Thyroid gland (tissue), 4 donors: ENCODE measurements at regions of chr2 and their contacts with region 1.

Region 1: DNA sequence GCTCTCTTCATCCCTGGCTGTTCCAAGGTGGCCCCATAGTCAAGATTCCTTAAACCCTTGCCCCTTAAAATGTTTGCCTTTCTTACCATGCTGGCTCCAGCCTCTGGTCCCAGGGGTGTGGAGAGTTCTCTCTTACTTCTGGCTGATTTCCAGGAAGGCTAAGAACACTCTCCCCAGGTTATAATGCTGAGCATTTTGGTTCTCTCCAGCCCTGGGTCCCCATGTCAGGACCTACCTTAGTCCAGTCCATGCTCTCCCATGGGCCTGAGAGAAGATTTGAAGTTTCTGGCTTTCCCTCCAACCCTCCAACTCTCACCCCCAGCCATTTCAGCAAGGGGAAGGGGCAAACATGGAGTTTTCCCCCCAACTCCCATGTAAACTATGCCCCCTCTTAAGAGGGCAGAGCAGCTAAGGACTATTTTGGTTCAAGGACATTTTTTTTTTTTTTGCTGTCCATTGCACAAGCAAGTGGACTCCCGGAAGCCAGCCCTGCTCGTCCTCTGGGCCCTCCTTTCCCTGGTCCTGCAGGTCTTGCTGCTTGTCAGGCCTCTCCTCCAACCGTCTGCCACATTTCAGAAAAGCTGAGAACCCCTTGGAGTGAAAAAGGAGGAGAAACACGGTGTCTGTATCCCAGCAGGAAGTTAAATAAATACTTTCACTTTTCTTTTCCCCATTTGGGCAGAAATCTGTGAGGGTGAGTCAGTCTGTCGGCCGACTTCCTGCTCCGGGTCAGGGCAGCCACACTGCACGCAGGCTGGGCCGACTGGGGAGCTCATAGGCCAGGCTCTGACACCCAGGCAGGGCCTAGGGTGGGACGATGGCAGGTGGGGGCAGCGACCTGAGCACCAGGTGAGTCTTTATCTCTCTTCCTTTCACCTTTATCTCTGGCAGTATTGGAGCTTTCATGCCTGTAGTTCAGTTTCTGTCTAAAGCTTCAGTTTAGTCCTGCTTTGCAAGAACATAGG is at the start of gene SP140L:
- DNase-seq: peak; percentile 51 to 65
- H3K4me3 ChIP-seq: peak within 1 kb of the TSS in 2 of 3 donors; percentile 19 to 40
- H3K27ac ChIP-seq: peak within 1 kb of the TSS; percentile 41 to 62 (median 59)
- H3K4me1 ChIP-seq: peaks cover 9% of the 10 kb centered on the region in 2 donors
- H3K27me3 ChIP-seq: no peaks in the 10 kb centered on the region
- CTCF ChIP-seq: no peak
- POLR2A ChIP-seq: no peak
- total RNA-seq, gene SP140L: 6.5 to 18.6 (median 8.4) TPM

Region 2: DNA sequence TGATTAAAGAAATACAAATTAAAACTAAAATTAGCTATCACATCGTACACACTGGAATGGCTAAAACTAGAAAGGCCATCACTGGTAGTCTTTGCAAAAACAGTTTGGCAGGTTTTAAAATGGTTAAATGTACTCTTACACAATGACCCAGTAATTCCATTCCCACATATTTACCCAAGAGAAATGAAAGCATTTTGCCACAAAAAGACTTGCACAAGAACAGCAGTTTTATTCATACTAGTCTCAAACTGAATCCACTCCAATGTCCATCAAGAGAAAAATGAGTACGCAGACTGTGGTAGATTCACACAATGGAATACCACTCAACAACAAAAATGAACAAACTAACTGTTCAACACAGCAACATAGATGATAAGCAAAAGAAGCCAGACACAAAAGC is 29.3 kb after region 1 on chr2:
- intact Hi-C with region 1: no loop called
- DNase-seq: no peak
- H3K4me3 ChIP-seq: no peak overlapping the region
- H3K27ac ChIP-seq: no peak overlapping the region
- H3K4me1 ChIP-seq: no peaks in the 10 kb centered on the region
- H3K27me3 ChIP-seq: no peaks in the 10 kb centered on the region
- CTCF ChIP-seq: no peak
- POLR2A ChIP-seq: no peak

Region 3: GRCh38 chr2:230423851-230424458 is 97.2 kb after region 1 on chr2:
- intact Hi-C with region 1: loop called (anchors 10 kb)
- DNase-seq: no peak
- H3K4me3 ChIP-seq: no peak overlapping the region
- H3K27ac ChIP-seq: peak overlapping the region; percentile 18 to 39 (median 33)
- H3K4me1 ChIP-seq: peaks cover 5 to 58% of the 10 kb centered on the region in 2 donors
- H3K27me3 ChIP-seq: no peaks in the 10 kb centered on the region
- CTCF ChIP-seq: no peak
- POLR2A ChIP-seq: no peak